ENCODE measurements at regions of chr18 and their contacts with region 1.

Region 1: GRCh38 chr18:22585821-22586220 is 168.1 kb upstream of the CTAGE1 start:
- DNase-seq: no peak
- H3K4me3 ChIP-seq: no peak overlapping the region
- H3K27ac ChIP-seq: no peak overlapping the region
- H3K4me1 ChIP-seq: no peaks in the 10 kb centered on the region
- H3K27me3 ChIP-seq: no peaks in the 10 kb centered on the region
- CTCF ChIP-seq: no peak
- EP300 ChIP-seq: no peak
- POLR2A ChIP-seq: no peak

Region 2: GRCh38 chr18:22639026-22639463 is 53.2 kb after region 1 on chr18:
- intact Hi-C with region 1: loop called (anchors 10 kb)
- DNase-seq: no peak
- H3K4me3 ChIP-seq: no peak overlapping the region
- H3K27ac ChIP-seq: no peak overlapping the region
- H3K4me1 ChIP-seq: no peaks in the 10 kb centered on the region
- H3K27me3 ChIP-seq: no peaks in the 10 kb centered on the region
- CTCF ChIP-seq: no peak
- EP300 ChIP-seq: no peak
- POLR2A ChIP-seq: no peak

Measured in esophagus muscularis mucosa (tissue), 4 donors.